ENCODE measurements at regions of chr4 and their contacts with region 1.

Region 1: DNA sequence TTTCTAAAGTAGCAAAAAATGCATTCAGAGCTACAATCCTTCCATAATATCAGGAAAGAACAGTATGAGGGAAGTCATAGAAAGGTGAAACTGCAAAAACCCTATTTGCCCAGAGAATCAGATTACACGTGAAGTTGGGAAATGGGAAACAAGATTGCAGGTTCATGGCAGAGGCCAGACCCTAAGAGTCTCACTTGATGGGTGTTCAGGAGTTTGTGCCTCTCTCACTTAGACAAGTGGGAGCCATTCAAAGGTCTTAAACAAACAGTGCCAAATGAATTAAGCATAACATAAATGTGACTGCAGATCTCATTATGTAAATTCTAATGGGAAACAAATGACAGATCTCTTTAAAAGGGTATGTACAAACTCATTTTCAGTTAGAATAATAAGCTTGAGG is 91.6 kb downstream of the ARAP2 start:
- DNase-seq: no peak
- ATAC-seq: no peak
- H3K4me3 ChIP-seq: no peak overlapping the region
- H3K27ac ChIP-seq: no peak overlapping the region
- H3K4me1 ChIP-seq: no peaks in the 10 kb centered on the region
- H3K27me3 ChIP-seq: no peaks in the 10 kb centered on the region
- CTCF ChIP-seq: no peak
- EP300 ChIP-seq: no peak
- POLR2A ChIP-seq: no peak
- RAD21 ChIP-seq: no peak

Region 2: GRCh38 chr4:35820003-35820402 is 332.7 kb before region 1 on chr4:
- CTCF ChIA-PET with region 1: no interaction called
- POLR2A ChIA-PET with region 1: no interaction called
- RAD21 ChIA-PET with region 1: no interaction called
- SMC1A ChIA-PET with region 1: no interaction called
- in situ Hi-C with region 1: no loop called
- intact Hi-C with region 1: no loop called
- DNase-seq: no peak
- ATAC-seq: no peak
- H3K4me3 ChIP-seq: no peak overlapping the region
- H3K27ac ChIP-seq: no peak overlapping the region
- H3K4me1 ChIP-seq: no peaks in the 10 kb centered on the region
- H3K27me3 ChIP-seq: no peaks in the 10 kb centered on the region
- CTCF ChIP-seq: no peak
- EP300 ChIP-seq: no peak
- POLR2A ChIP-seq: no peak
- RAD21 ChIP-seq: no peak

Region 3: DNA sequence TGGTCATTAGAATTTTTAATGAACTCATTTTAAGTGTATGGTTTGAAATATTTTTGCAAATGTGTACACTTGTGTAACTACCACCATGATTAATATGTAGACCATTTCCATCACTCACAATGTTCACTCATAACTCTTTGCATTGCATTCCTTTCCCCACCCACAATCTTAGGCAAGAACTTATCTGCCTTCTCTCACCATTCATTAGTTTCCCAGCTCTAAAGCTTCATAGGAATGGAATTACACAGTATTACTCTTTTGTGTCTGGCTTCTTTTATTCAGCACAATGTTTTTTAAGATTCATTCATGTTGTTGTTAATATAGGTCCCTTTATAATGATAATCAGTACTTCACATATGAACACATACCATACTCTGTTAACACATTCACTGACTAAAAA is 14.5 kb before region 1 on chr4:
- CTCF ChIA-PET with region 1: interaction called, 5 read pairs
- POLR2A ChIA-PET with region 1: no interaction called
- RAD21 ChIA-PET with region 1: interaction called, 4 read pairs
- SMC1A ChIA-PET with region 1: interaction called, 22 read pairs
- in situ Hi-C with region 1: no loop called
- intact Hi-C with region 1: no loop called
- DNase-seq: no peak
- ATAC-seq: no peak
- H3K4me3 ChIP-seq: no peak overlapping the region
- H3K27ac ChIP-seq: no peak overlapping the region
- H3K4me1 ChIP-seq: no peaks in the 10 kb centered on the region
- H3K27me3 ChIP-seq: no peaks in the 10 kb centered on the region
- CTCF ChIP-seq: no peak
- EP300 ChIP-seq: no peak
- POLR2A ChIP-seq: no peak
- RAD21 ChIP-seq: no peak

Region 4: DNA sequence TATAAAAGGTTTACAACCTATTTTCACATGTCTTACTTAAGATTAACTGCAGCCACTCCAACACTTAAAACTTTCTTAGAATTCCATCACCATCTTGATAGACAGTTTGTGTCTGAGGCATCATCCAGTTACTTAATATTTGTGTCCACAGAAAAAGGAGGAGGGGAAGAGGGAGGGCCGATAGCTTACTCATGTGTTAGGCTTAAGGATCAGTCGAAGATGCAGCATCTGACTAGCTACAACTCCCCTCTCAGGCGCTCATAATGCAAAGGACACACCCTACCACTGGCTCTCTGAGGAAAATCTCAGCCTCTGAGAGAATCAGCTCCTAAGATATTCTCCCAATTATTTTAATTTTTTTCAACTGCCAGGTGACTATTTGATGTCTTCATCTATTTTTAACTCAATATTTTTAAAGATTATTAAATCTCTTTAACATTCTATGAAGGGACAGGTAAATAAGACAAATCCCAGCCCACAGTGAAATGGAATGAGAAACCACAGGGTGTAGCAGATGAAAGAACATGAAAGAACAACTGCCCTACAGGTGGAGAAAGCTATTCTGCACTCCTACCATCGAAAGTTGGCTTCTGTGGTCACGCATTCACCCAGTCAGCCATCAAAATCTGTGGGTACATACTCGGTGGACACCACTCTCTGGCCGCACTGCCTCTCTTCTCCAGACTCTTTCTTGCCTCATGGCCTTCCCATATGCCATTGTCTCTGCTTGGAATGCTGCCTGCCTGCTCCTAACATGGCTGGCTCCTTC is 43.6 kb after region 1 on chr4:
- CTCF ChIA-PET with region 1: no interaction called
- POLR2A ChIA-PET with region 1: no interaction called
- RAD21 ChIA-PET with region 1: no interaction called
- SMC1A ChIA-PET with region 1: no interaction called
- in situ Hi-C with region 1: no loop called
- intact Hi-C with region 1: no loop called
- DNase-seq: no peak
- ATAC-seq: no peak
- H3K4me3 ChIP-seq: no peak overlapping the region
- H3K27ac ChIP-seq: no peak overlapping the region
- H3K4me1 ChIP-seq: no peaks in the 10 kb centered on the region
- H3K27me3 ChIP-seq: no peaks in the 10 kb centered on the region
- CTCF ChIP-seq: no peak
- EP300 ChIP-seq: no peak
- POLR2A ChIP-seq: no peak
- RAD21 ChIP-seq: no peak

Measured in GM12878 (cell line).